CD8-positive, alpha-beta memory T cell (primary cell): ENCODE measurements at regions of chr2 and their contacts with region 1.

Region 1: DNA sequence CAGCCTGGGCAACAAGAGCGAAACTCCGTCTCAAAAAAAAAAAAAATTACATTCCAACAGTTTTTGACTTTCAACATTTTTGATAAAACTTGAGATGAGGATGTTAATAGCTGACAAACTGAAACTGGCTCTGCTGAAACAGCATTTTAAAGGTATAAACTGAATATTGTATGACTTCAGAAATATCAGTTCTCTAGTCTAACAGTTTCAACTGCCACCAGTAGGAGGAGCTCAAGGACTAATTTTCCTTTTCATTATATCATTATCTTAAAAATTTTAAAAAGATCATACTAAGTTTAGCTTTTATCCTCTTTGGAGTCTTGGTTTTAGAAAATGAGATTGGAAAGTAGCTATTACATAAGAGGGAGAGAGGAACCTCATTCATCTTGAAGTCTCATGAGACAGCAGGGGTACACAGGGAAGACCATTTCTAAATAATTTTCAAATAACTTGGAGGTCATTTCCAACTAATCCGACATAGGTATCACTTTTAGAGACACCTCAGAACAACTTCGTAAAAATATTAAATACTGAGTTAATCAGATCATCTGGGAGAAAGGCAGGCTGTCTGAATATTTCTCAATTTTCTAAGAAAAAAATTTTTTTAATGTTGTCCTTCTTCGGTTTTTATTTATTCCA is 37.6 kb upstream of the MCM6 start:
- DNase-seq: peak in 4 of 5 donors; percentile 20 to 58 (median 30)
- H3K4me3 ChIP-seq: no peak overlapping the region
- H3K4me3 Mint-ChIP-seq: no peak overlapping the region
- H3K27ac ChIP-seq: no peak overlapping the region
- H3K27ac Mint-ChIP-seq: peak overlapping the region; percentile 50 to 93 (median 67)
- H3K4me1 ChIP-seq: no peaks in the 10 kb centered on the region
- H3K4me1 Mint-ChIP-seq: peaks cover 0 to 9% (median 4%) of the 10 kb centered on the region in 3 donors
- H3K27me3 ChIP-seq: no peaks in the 10 kb centered on the region
- H3K27me3 Mint-ChIP-seq: no peaks in the 10 kb centered on the region

Region 2: DNA sequence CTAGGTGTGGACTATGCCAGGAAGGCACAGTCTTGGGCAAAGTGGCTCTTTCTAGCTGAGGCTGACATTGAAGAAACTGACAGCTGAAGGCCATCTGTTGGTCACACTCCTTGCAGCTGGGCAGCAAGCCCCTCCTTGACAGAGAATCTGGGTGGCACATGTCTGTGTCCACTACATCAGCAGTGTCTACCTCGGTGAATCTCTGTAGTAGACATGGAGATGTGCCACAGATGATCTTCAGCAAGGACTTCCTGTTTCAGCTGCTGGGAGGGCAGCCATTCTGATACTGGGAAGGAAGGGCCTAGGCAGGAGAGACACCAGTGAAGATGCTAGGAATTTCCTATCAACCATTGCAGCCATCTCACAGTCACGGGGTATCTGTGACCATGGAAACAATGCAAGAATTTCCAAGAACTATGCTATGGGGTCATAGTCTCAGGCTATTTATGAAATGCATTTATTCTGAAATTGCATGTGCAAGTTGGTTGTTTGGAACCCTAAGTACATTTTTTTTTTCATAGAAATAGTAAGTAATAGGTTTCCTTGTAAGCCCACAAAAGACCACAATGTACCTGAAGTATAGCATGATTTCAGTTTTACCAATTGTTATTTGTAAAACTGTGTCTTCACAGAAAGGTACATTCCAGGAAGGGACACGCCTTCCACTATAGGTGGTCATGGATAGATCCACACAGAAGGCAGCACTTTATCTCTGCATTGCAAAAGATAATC is 135.3 kb after region 1 on chr2:
- CTCF ChIA-PET with region 1: no interaction called
- POLR2A ChIA-PET with region 1: no interaction called
- DNase-seq: no peak
- H3K4me3 ChIP-seq: no peak overlapping the region
- H3K4me3 Mint-ChIP-seq: no peak overlapping the region
- H3K27ac ChIP-seq: no peak overlapping the region
- H3K27ac Mint-ChIP-seq: peak overlapping the region in 7 of 8 donors; percentile 11 to 94 (median 83)
- H3K4me1 ChIP-seq: peaks cover 56% of the 10 kb centered on the region
- H3K4me1 Mint-ChIP-seq: peaks cover 45 to 53% (median 51%) of the 10 kb centered on the region in 3 donors
- H3K27me3 ChIP-seq: no peaks in the 10 kb centered on the region
- H3K27me3 Mint-ChIP-seq: no peaks in the 10 kb centered on the region

Region 3: DNA sequence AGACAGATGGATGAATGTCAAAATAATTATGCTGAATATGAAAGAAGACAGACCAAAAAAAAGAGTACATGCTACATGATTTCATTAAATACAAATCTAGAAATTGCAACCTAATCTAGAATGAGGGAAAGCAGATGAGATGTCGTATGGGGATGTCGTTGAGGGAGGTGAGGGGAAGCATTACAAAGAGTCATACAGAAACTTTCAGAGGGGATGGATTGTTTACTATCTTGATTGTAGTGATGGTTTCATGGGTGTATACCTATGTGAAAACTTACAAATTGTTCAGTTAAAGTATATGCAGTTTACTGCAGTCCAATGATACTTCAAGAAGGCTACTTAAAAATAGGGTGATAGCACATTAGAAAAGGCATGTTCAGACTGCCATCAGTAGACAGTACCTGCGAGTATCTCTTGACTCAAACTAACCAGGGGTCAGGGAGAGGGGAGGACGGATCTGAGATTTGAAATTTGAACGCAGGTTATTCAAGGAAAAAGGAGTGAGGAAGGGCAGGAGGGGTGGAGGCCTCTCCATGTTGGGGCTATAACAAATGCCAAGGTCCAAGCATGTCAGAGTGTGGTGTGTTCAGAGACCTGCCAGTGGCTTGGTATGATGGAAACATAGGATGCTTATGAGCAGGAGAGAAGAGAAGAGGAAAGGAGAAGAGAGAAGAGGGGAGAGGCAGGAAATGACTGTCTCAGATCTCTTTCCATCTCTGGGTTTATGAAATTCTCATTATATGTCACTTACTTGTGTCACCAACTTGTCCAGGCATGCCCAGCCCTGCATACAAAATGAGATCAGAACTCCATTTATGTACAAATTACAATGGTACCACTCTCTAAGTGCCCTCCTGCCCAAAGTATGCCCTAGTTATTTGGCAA is 461.4 kb after region 1 on chr2:
- CTCF ChIA-PET with region 1: interaction called, 194 read pairs
- POLR2A ChIA-PET with region 1: no interaction called
- DNase-seq: no peak
- H3K4me3 ChIP-seq: no peak overlapping the region
- H3K4me3 Mint-ChIP-seq: peak overlapping the region in 1 of 7 donors; percentile 19
- H3K27ac ChIP-seq: no peak overlapping the region
- H3K27ac Mint-ChIP-seq: peak overlapping the region in 7 of 8 donors; percentile 1 to 92 (median 38)
- H3K4me1 ChIP-seq: peaks cover 21% of the 10 kb centered on the region
- H3K4me1 Mint-ChIP-seq: peaks cover 24 to 50% (median 45%) of the 10 kb centered on the region in 3 donors
- H3K27me3 ChIP-seq: no peaks in the 10 kb centered on the region
- H3K27me3 Mint-ChIP-seq: peaks cover 0 to 3% of the 10 kb centered on the region in 2 donors

Region 4: DNA sequence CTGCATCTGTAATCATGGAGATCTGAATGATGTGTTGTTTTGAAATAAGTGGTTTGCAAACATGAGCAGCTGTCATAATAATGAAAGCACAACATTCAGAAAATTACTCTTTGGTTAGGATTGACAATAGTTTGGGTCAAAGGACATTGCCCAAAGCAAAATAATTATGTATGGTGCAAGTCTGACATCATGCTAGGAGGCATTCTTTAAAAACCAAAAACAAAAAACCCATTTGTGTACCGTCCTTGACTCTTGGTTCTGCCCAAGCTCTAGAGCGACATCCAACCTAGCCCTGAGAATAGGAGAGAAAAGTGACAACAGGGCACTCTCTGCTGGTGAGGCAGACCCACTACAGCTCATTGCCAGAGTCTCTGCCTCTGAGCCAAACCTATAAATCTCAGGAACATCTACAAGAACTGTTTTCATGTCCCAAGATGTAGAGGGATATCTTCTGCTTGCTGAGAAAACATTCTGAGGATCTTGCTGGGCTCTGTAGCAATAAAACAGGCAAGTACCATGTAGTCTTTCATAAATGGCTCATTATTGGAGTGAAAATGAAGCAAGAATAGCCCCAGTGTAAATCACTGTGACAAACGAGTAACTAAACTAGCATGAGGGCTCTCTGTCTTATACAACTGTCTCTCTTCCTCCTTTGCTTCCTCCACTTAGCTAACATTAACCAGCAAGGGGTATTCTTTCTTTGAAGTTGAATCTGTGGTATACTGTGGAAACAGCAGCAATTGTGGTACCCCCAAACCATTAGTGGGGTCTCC is 470.9 kb after region 1 on chr2:
- CTCF ChIA-PET with region 1: interaction called, 194 read pairs
- POLR2A ChIA-PET with region 1: interaction called, 4 read pairs
- DNase-seq: peak; percentile 12 to 68 (median 53)
- H3K4me3 ChIP-seq: no peak overlapping the region
- H3K4me3 Mint-ChIP-seq: peak overlapping the region in 1 of 7 donors; percentile 43
- H3K27ac ChIP-seq: no peak overlapping the region
- H3K27ac Mint-ChIP-seq: peak overlapping the region in 7 of 8 donors; percentile 11 to 97 (median 93)
- H3K4me1 ChIP-seq: peaks cover 25% of the 10 kb centered on the region
- H3K4me1 Mint-ChIP-seq: peaks cover 32 to 37% (median 36%) of the 10 kb centered on the region in 3 donors
- H3K27me3 ChIP-seq: no peaks in the 10 kb centered on the region
- H3K27me3 Mint-ChIP-seq: peaks cover 0 to 3% of the 10 kb centered on the region in 2 donors